Astrocyte of the cerebellum (primary cell): ENCODE measurements at regions of chr3 and their contacts with region 1.

Region 1: DNA sequence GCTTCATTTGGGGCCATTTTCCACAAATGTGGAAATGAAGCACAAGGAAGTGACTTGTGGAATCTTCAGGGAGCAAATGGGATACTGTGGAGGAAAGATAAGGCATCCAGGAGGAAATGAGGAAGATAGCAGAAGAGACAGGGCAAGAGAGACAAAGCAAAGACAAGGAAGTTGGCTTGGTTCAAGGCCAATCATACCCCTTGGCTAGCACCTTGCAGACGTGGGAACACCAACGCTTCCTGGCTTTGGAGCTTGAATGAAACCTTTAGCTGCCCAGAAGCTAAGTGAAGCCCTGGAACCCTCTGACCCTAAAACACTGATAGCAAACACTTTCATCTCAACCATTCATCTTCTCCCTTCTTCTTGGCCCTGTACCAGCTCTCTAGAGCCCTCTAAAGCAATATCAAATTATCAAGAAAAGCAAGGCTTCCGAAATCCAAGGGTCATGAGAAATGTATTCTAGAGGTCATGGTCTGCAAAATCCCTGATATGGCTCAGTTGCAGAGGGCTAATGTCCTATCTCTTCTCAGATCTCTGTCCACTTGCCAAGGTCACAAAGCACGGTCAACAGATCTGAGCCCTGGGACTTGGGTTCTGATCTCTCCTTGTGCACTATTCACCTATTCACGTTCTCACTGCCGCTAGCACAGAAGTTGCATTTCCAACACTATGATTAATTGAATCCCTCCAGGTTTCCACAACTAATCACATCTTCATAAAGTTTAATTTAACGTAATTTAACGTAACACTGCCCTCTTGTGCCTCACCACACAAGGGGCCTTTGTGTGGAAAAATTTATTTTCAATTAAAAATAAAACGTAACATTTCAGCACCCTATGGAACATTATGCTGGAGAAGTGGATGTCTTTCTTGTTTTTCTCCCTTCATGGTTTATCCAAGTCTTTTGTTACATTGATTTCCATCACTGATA is 557.6 kb upstream of the ADAMTS9 start:
- DNase-seq: peak; percentile 31
- H3K4me3 ChIP-seq: no peak overlapping the region
- CTCF ChIP-seq: peak; percentile 62

Region 2: DNA sequence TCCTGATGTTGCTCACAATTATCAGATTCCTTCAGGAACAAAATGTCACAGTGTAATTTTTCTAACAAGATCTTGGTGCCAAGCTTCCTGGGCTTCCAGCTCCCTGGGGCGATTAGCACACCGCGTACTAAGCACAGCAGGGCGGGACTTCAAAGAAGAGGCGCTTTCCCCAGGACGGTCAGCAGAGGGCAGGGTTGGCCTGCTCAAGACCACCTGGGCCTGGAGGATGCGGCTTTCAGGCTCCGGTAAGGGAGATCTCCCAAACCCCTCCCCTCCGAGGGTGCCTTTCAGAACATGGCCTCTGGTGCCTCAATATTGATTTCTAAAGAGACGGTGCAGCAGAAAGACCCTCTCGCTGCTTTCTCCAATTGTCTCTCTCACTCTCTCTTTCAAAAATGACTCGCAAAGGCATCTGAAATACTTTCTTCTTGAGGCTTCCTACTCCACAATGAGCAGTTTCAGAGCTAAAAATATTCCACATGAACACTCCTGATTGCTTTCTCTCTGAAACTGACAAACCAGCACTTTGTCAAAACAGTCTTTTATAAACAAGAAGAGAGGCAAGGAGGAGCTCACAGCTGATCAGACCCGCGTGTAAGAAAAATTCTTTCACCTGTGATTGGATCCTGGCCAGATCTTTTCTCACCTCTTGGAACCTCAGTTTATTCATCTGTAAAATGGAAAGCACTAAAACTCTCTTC is 711.6 kb before region 1 on chr3:
- in situ Hi-C with region 1: loop called (anchors 25 kb)
- DNase-seq: peak; percentile 85
- H3K4me3 ChIP-seq: no peak overlapping the region
- CTCF ChIP-seq: peak; percentile 90

Region 3: GRCh38 chr3:65291448-65292105 is 46.2 kb after region 1 on chr3:
- in situ Hi-C with region 1: no loop called
- DNase-seq: no peak
- H3K4me3 ChIP-seq: no peak overlapping the region
- CTCF ChIP-seq: no peak